Activated CD4-positive, alpha-beta T cell treated with anti-CD3 and anti-CD28 coated beads, Interleukin-2, amount 10 ng/mL, durations not matched to agents 24 days and 14 days (primary cell): ENCODE measurements at regions of chr14 and their contacts with region 1.

Region 1: DNA sequence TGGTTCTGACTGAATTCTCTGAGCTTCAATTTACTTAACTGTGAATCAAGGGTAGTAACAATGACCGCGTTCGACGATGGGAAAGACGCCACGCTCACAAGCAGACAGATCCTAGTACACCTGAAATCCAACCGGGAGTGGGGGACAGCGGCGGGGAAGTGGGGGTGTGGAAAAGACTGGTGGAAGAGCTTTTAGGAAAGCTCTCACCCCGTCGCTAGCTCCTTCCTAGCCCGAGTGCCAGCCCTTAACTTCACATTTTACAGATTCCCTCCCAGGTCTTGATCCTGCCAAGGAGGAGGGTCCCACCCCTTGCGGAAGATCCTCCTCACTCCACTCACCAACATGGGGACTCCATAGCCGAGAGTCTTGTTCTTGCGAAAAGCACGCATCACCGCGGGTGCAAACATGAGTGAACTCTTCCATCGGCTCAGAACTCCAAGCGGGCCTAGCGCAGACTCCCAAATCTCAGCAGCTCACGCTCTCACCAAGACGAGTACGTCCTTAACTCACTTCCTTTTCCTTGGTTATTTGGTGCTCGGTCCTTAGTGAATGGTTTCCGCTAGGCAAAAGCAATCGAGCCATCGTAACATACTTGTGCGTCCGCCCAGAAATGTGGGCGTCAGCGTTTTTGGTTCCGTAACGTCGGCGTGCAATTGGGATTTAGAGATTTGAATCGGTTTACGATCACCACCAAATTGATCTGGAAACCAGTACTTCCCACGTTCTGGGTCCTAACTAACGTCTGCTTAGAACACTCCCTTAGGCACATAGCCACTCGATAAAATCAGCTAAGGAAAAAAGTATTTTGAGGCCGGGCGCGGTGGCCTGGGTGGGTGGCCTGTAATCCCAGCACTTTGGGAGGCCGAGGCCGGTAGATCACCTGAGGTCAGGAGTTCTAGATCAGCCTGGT is at the start of gene COX16:
- DNase-seq: peak; percentile 95
- H3K4me3 Mint-ChIP-seq: peak within 1 kb of the TSS; percentile 98
- H3K27ac Mint-ChIP-seq: peak within 1 kb of the TSS; percentile 91
- H3K4me1 Mint-ChIP-seq: peaks cover 18% of the 10 kb centered on the region
- H3K27me3 Mint-ChIP-seq: peaks cover 6% of the 10 kb centered on the region
- total RNA-seq, gene COX16: 65.8 and 79.0 TPM in 2 replicates

Region 2: DNA sequence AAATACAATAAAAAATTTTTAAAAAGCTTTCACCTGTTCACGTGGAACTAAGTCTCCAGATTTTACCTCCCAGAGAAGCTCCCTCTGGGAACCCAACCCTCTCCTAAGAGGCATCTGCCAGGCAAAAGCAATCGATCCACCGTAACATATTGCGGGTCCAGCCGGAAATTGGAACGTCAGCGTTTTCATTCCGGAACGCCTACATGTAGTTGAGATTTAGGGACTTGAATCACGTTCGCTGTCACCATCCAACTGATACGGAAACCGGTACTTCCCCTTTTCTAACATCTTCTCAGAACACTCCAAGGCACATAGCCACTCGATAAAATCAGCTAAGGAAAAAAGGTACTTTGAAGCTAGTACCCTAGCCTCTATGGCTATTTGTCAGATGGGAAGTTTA is 70.3 kb before region 1 on chr14:
- intact Hi-C with region 1: loop called (anchors 1 kb)
- DNase-seq: peak; percentile 64
- H3K4me3 Mint-ChIP-seq: no peak overlapping the region
- H3K27ac Mint-ChIP-seq: no peak overlapping the region
- H3K4me1 Mint-ChIP-seq: peaks cover 2% of the 10 kb centered on the region
- H3K27me3 Mint-ChIP-seq: peaks cover 12% of the 10 kb centered on the region